HCT116 (cell line): ENCODE measurements at regions of chr5 and their contacts with region 1.

Region 1: DNA sequence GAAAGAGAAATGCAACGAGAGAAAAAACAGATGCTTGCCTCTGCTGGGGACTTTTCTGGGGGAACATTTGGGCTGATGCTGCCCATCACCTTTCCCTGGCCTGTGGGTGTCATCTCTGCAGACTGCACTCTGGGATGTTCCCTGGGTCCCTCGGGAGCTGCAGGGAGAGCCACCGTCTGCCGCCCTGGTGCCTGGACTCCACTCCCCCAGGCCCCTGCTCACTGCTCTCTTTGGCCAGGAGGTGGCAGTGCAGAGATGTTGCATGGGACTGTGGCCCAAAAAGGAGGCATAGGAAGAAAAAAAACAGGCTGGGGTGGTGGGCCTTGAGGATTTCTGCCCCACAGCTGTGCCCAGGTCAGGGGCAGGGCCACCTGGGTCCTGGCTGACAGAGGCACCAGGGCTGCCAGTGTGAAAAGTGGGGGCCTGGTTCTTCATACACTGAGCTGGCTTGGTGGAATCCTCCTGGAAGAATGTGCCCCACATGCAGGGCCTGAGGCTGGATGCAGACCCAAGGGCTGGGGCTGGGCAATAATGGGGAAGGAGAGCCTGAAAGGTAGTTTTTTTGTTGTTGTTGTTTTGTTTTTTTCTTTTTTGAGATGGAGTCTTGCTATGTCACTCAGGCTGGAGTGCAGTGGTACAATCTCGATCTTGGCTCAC is 353.6 kb downstream of the SLIT3 start:
- DNase-seq: no peak
- ATAC-seq: peak; percentile 98
- H3K4me3 ChIP-seq: no peak overlapping the region
- H3K27ac ChIP-seq: no peak overlapping the region
- H3K4me1 ChIP-seq: no peaks in the 10 kb centered on the region
- H3K27me3 ChIP-seq: peaks cover 9% of the 10 kb centered on the region; the same call in 1 of the 2 replicates
- CTCF ChIP-seq: peak; percentile 44 to 94 (median 84)
- POLR2A ChIP-seq: no peak
- RAD21 ChIP-seq: peak; percentile 64

Region 2: DNA sequence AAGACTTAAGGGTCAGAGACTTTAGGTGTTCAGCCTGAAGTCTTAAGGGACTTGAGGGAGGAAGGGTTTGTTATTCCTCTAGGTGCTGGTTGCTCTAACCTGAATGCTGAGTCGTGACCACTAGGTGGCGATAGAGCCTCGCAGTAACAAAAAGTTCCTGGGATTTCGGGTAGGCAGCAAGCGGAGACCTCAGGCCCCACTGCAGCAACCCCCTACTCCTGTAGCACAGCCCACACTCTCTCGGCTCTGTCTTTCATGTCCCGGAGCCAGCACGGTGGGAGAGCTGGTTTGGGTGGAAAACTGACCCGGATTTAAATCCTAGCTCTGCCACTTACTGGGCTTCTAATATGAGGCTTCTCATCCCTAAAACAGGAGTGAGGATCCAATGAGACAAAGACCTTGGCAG is 267.8 kb before region 1 on chr5:
- CTCF ChIA-PET with region 1: no interaction called
- POLR2A ChIA-PET with region 1: no interaction called
- RAD21 ChIA-PET with region 1: no interaction called
- intact Hi-C with region 1: loop called (anchors 2 kb)
- DNase-seq: peak; percentile 59
- ATAC-seq: peak; percentile 91
- H3K4me3 ChIP-seq: no peak overlapping the region
- H3K27ac ChIP-seq: no peak overlapping the region
- H3K4me1 ChIP-seq: no peaks in the 10 kb centered on the region
- H3K27me3 ChIP-seq: no peaks in the 10 kb centered on the region; the same call in 1 of the 2 replicates
- CTCF ChIP-seq: peak; percentile 59 to 96 (median 87); a peak in 5 of 6 replicates
- POLR2A ChIP-seq: no peak
- RAD21 ChIP-seq: peak; percentile 83

Region 3: GRCh38 chr5:168706655-168707069 is 240.7 kb before region 1 on chr5:
- CTCF ChIA-PET with region 1: interaction called, 3 read pairs
- POLR2A ChIA-PET with region 1: no interaction called
- RAD21 ChIA-PET with region 1: no interaction called
- intact Hi-C with region 1: loop called (anchors 10 kb)
- DNase-seq: peak; percentile 7
- ATAC-seq: peak; percentile 89
- H3K4me3 ChIP-seq: no peak overlapping the region
- H3K27ac ChIP-seq: no peak overlapping the region
- H3K4me1 ChIP-seq: no peaks in the 10 kb centered on the region
- H3K27me3 ChIP-seq: no peaks in the 10 kb centered on the region
- CTCF ChIP-seq: peak; percentile 45 to 71 (median 67); a peak in 5 of 6 replicates
- POLR2A ChIP-seq: no peak
- RAD21 ChIP-seq: peak; percentile 79

Region 4: GRCh38 chr5:168776070-168776469 is 171.3 kb before region 1 on chr5:
- CTCF ChIA-PET with region 1: no interaction called
- POLR2A ChIA-PET with region 1: no interaction called
- RAD21 ChIA-PET with region 1: no interaction called
- intact Hi-C with region 1: no loop called
- DNase-seq: no peak
- ATAC-seq: no peak
- H3K4me3 ChIP-seq: no peak overlapping the region
- H3K27ac ChIP-seq: no peak overlapping the region
- H3K4me1 ChIP-seq: no peaks in the 10 kb centered on the region
- H3K27me3 ChIP-seq: peaks cover 83% of the 10 kb centered on the region
- CTCF ChIP-seq: no peak
- POLR2A ChIP-seq: no peak
- RAD21 ChIP-seq: no peak

Region 5: GRCh38 chr5:170216266-170216864 is 1269.0 kb after region 1 on chr5:
- CTCF ChIA-PET with region 1: no interaction called
- POLR2A ChIA-PET with region 1: no interaction called
- RAD21 ChIA-PET with region 1: no interaction called
- intact Hi-C with region 1: loop called (anchors 5 kb)
- DNase-seq: peak; percentile 35
- ATAC-seq: peak; percentile 71
- H3K4me3 ChIP-seq: no peak overlapping the region
- H3K27ac ChIP-seq: no peak overlapping the region
- H3K4me1 ChIP-seq: peaks cover 2 to 18% of the 10 kb centered on the region in 2 experiments; a peak in 2 of 4 replicates
- H3K27me3 ChIP-seq: no peaks in the 10 kb centered on the region; the same call in 1 of the 2 replicates
- CTCF ChIP-seq: peak; percentile 44 to 69 (median 66); a peak in 5 of 6 replicates
- POLR2A ChIP-seq: no peak
- RAD21 ChIP-seq: peak; percentile 87